Left ventricle myocardium superior (tissue), 1 donor: ENCODE measurements at regions of chr5 and their contacts with region 1.

Region 1: GRCh38 chr5:116068028-116068632 is 16.7 kb upstream of the COMMD10 start:
- DNase-seq: no peak
- ATAC-seq: no peak

Region 2: DNA sequence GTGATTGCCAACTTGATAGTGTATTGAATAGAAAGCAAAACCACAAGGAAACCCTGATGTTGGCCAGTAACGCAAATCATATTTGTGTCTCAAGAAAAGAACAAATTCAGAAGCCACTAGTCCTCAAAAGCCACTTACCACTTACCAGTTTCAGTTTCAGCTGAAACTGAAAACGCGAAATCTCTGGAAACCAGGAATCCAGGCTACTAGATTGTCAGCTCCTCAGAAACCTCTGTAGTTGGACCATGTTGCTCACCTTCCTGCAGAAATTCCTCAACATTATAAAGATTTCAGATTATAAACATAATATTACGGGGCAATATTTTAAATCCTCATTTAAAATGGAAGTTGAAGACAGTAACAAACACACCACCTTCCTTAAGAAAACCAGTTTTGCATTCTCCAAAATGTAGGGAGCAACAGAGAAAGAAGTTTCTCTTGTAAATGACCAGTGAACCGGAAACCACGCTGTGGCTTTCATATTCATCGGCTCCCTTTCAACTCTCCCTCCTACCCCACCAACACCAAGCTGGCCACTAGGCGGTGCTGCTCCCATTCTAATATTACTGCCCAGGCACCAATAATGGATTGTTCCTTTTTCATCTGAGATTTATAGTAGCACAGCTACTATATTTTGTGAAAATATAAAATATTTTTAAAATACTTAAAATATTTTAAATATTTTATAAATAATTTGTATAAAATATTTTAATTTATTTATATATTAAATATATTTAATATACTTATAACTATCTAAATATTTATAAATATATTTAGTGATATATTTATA is 433.6 kb before region 1 on chr5:
- intact Hi-C with region 1: no loop called
- DNase-seq: peak; percentile 91
- ATAC-seq: peak; percentile 99

Region 3: DNA sequence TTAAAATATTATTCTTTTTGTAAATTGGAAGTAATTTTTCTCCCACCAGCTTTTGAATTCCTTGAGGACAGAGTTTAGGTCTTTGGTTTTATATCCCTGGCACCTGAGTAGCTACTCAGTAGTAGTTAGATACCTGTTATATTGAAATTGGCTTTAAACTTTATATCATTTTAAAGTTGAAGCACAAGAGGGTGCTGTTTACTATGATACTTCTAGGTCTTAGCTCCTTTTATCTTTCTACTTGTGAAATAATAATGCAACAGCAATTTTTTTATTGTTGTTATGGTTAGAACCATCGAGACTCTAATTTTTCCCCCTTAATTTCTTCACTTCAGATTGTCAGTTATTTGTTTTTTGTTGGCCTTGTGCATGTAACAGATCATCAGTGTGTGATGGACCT is 180.1 kb before region 1 on chr5:
- intact Hi-C with region 1: loop called (anchors 10 kb)
- DNase-seq: no peak
- ATAC-seq: no peak

Region 4: GRCh38 chr5:116355808-116356601 is 287.9 kb after region 1 on chr5:
- intact Hi-C with region 1: no loop called
- DNase-seq: no peak
- ATAC-seq: no peak